CD8-positive, alpha-beta memory T cell (primary cell): ENCODE measurements at regions of chr3 and their contacts with region 1.

Region 1: GRCh38 chr3:194671900-194672808 is at the start of gene LSG1:
- DNase-seq: peak; percentile 80 to 92 (median 86)
- H3K4me3 ChIP-seq: peak within 1 kb of the TSS; percentile 86
- H3K4me3 Mint-ChIP-seq: peak within 1 kb of the TSS; percentile 94 to 99 (median 99)
- H3K27ac ChIP-seq: peak within 1 kb of the TSS; percentile 95
- H3K27ac Mint-ChIP-seq: peak within 1 kb of the TSS; percentile 91 to 99 (median 99)
- H3K4me1 ChIP-seq: peaks cover 19% of the 10 kb centered on the region
- H3K4me1 Mint-ChIP-seq: peaks cover 29 to 58% (median 55%) of the 10 kb centered on the region in 3 donors
- H3K27me3 ChIP-seq: no peaks in the 10 kb centered on the region
- H3K27me3 Mint-ChIP-seq: peaks cover 3 to 4% of the 10 kb centered on the region in 2 donors
- total RNA-seq, gene LSG1: 65.2 to 68.8 TPM

Region 2: DNA sequence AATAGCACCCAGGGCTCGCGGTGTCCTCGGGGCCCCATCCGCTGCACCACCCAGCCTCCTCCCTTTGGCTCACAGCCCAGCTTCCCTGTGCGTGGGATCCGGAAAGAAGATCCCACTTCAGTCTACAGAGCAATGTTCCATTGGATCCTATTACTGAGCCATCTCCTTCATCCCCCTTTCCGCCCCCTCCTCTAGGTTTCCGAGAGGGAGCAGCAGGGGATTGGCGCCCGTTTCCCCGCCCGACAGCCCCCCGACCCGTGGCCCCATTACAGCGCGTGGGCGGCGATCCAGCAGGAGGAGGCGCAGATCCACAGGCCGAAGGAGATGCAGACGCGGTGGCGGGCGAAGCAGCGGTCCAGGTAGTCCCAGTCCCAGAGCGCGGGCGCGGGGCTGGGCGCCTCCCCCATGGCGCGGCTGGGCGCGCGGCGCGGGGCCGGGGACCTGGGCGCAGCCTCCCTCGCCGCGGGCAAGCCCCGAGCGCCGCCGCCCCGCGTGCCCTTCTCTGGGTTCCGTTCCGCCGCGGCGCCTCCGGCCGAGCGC is 39.3 kb before region 1 on chr3:
- CTCF ChIA-PET with region 1: interaction called, 11 read pairs
- POLR2A ChIA-PET with region 1: interaction called, 3 read pairs
- DNase-seq: no peak
- H3K4me3 ChIP-seq: peak overlapping the region; percentile 59
- H3K4me3 Mint-ChIP-seq: peak overlapping the region; percentile 83 to 91 (median 86)
- H3K27ac ChIP-seq: no peak overlapping the region
- H3K27ac Mint-ChIP-seq: peak overlapping the region in 4 of 8 donors; percentile 54 to 83 (median 59)
- H3K4me1 ChIP-seq: peaks cover 7% of the 10 kb centered on the region
- H3K4me1 Mint-ChIP-seq: peaks cover 11 to 19% (median 11%) of the 10 kb centered on the region in 3 donors
- H3K27me3 ChIP-seq: no peaks in the 10 kb centered on the region
- H3K27me3 Mint-ChIP-seq: no peaks in the 10 kb centered on the region

Region 3: DNA sequence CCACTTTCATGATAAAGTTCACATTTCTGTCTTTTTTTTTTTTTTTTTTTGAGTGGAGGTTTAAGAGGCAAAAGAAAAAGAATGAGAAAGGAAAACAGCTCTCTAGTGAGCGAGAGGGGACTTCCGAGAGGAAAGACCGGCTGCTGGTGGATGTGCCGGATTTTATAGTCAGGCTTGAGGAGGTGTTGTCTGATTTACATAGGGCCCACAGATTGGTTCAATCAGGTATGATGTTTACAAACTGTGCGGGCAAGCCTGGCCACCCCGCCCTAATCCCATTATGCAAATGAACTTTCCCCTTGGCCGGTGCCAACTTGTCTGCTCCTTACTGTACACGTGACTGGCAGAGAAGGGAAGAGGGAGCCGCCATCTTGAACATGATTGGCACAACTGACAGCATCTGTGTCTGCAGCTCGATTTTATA is 58.2 kb after region 1 on chr3:
- CTCF ChIA-PET with region 1: no interaction called
- POLR2A ChIA-PET with region 1: no interaction called
- DNase-seq: no peak
- H3K4me3 ChIP-seq: no peak overlapping the region
- H3K4me3 Mint-ChIP-seq: no peak overlapping the region
- H3K27ac ChIP-seq: no peak overlapping the region
- H3K27ac Mint-ChIP-seq: no peak overlapping the region
- H3K4me1 ChIP-seq: no peaks in the 10 kb centered on the region
- H3K4me1 Mint-ChIP-seq: peaks cover 0 to 2% (median 0%) of the 10 kb centered on the region in 3 donors
- H3K27me3 ChIP-seq: no peaks in the 10 kb centered on the region
- H3K27me3 Mint-ChIP-seq: peaks cover 18 to 55% of the 10 kb centered on the region in 2 donors

Region 4: GRCh38 chr3:195259475-195260279 is 587.5 kb after region 1 on chr3:
- CTCF ChIA-PET with region 1: interaction called, 13 read pairs
- POLR2A ChIA-PET with region 1: interaction called, 3 read pairs
- DNase-seq: peak; percentile 88 to 95 (median 93)
- H3K4me3 ChIP-seq: no peak overlapping the region
- H3K4me3 Mint-ChIP-seq: peak overlapping the region; percentile 66 to 80 (median 75)
- H3K27ac ChIP-seq: peak overlapping the region; percentile 85
- H3K27ac Mint-ChIP-seq: peak overlapping the region; percentile 42 to 97 (median 93)
- H3K4me1 ChIP-seq: peaks cover 18% of the 10 kb centered on the region
- H3K4me1 Mint-ChIP-seq: peaks cover 11 to 23% (median 15%) of the 10 kb centered on the region in 3 donors
- H3K27me3 ChIP-seq: no peaks in the 10 kb centered on the region
- H3K27me3 Mint-ChIP-seq: no peaks in the 10 kb centered on the region